CD8-positive, alpha-beta T cell (primary cell): ENCODE measurements at regions of chr3 and their contacts with region 1.

Region 1: GRCh38 chr3:186783073-186783730 is at the start of gene EIF4A2:
- DNase-seq: peak; percentile 79 to 96 (median 88)
- ATAC-seq: peak; percentile 67
- H3K4me3 ChIP-seq: peak within 1 kb of the TSS; percentile 90 to 95
- H3K4me3 Mint-ChIP-seq: peak within 1 kb of the TSS; percentile 99
- H3K27ac ChIP-seq: peak within 1 kb of the TSS; percentile 93 to 97
- H3K27ac Mint-ChIP-seq: peak within 1 kb of the TSS; percentile 99
- H3K4me1 ChIP-seq: peaks cover 38% of the 10 kb centered on the region
- H3K4me1 Mint-ChIP-seq: peaks cover 52% of the 10 kb centered on the region
- H3K27me3 ChIP-seq: no peaks in the 10 kb centered on the region
- H3K27me3 Mint-ChIP-seq: no peaks in the 10 kb centered on the region
- CTCF ChIP-seq: no peak
- total RNA-seq, gene EIF4A2: 934 to 978 TPM

Region 2: GRCh38 chr3:186570096-186570940 is 212.9 kb before region 1 on chr3 and contains the start of gene DNAJB11:
- CTCF ChIA-PET with region 1: no interaction called
- POLR2A ChIA-PET with region 1: interaction called, 34 read pairs
- intact Hi-C with region 1: loop called (anchors 1 to 2 kb)
- DNase-seq: peak; percentile 94 to 100 (median 97)
- ATAC-seq: peak; percentile 82
- H3K4me3 ChIP-seq: peak within 1 kb of the TSS; percentile 73 to 96
- H3K4me3 Mint-ChIP-seq: peak within 1 kb of the TSS; percentile 94
- H3K27ac ChIP-seq: peak within 1 kb of the TSS; percentile 94 to 97
- H3K27ac Mint-ChIP-seq: peak within 1 kb of the TSS; percentile 98
- H3K4me1 ChIP-seq: peaks cover 30% of the 10 kb centered on the region
- H3K4me1 Mint-ChIP-seq: peaks cover 59% of the 10 kb centered on the region
- H3K27me3 ChIP-seq: no peaks in the 10 kb centered on the region
- H3K27me3 Mint-ChIP-seq: no peaks in the 10 kb centered on the region
- CTCF ChIP-seq: no peak
- total RNA-seq, gene DNAJB11: 70.2 to 73.4 TPM

Region 3: GRCh38 chr3:186798239-186798874 is 15.2 kb after region 1 on chr3:
- CTCF ChIA-PET with region 1: interaction called, 4 read pairs
- POLR2A ChIA-PET with region 1: interaction called, 22 read pairs
- intact Hi-C with region 1: no loop called
- DNase-seq: no peak
- ATAC-seq: no peak
- H3K4me3 ChIP-seq: no peak overlapping the region
- H3K4me3 Mint-ChIP-seq: no peak overlapping the region
- H3K27ac ChIP-seq: no peak overlapping the region
- H3K27ac Mint-ChIP-seq: no peak overlapping the region
- H3K4me1 ChIP-seq: no peaks in the 10 kb centered on the region
- H3K4me1 Mint-ChIP-seq: peaks cover 18% of the 10 kb centered on the region
- H3K27me3 ChIP-seq: no peaks in the 10 kb centered on the region
- H3K27me3 Mint-ChIP-seq: no peaks in the 10 kb centered on the region
- CTCF ChIP-seq: no peak

Region 4: DNA sequence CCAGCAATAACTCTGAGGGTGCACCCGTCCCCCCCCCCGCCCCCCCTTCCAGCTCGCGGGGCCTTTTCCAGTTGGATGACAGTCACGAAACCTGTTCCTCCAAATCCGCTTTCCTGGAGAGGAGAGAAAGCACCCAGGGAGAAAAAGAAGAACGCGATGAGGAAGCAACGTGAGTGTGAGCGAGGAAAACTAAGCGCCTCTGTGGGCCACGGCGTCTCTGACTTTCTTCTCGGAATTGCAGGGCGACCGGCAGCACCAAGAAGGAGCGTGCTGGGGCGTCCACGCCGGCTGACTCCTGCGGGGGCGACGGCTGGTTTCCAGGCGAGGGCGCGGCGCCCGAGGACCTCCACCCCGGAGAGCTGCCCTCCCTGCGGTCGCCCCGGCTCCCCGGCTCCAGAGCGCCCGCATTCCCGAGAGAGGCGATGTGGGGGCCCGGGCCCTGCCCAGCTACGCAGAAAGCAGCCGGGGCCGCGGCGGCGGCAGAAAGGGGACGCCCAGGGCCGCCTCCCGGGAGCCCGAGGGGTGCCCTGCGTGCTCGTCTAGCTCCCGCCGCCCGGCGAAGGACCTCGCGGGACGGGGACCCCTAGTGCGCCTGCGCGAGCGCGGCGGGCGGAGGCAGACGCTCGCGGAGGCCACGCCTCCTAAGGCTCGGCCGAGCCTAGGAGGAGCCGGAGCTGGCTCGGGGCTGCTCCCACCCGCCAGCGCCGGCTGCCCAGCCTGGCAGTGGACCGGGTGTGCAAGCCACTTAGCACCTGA is 44.0 kb after region 1 on chr3:
- CTCF ChIA-PET with region 1: interaction called, 6 read pairs
- POLR2A ChIA-PET with region 1: interaction called, 39 read pairs
- intact Hi-C with region 1: loop called (anchors 1 to 2 kb)
- DNase-seq: peak; percentile 59 to 95 (median 83)
- ATAC-seq: peak; percentile 93
- H3K4me3 ChIP-seq: peak overlapping the region; percentile 56 to 70
- H3K4me3 Mint-ChIP-seq: peak overlapping the region; percentile 75
- H3K27ac ChIP-seq: no peak overlapping the region
- H3K27ac Mint-ChIP-seq: no peak overlapping the region
- H3K4me1 ChIP-seq: peaks cover 21% of the 10 kb centered on the region
- H3K4me1 Mint-ChIP-seq: peaks cover 24% of the 10 kb centered on the region
- H3K27me3 ChIP-seq: peaks cover 14 to 26% of the 10 kb centered on the region in 2 experiments
- H3K27me3 Mint-ChIP-seq: peaks cover 50% of the 10 kb centered on the region
- CTCF ChIP-seq: no peak

Region 5: GRCh38 chr3:187041362-187042307 is 258.4 kb after region 1 on chr3:
- CTCF ChIA-PET with region 1: no interaction called
- POLR2A ChIA-PET with region 1: interaction called, 3 read pairs
- intact Hi-C with region 1: loop called in 1 of 2 experiments (anchors 5 kb)
- DNase-seq: peak in 8 of 9 experiments; percentile 38 to 84 (median 62)
- ATAC-seq: peak; percentile 95
- H3K4me3 ChIP-seq: peak overlapping the region in 1 of 2 experiments; percentile 5
- H3K4me3 Mint-ChIP-seq: peak overlapping the region; percentile 49
- H3K27ac ChIP-seq: peak overlapping the region; percentile 44 to 86
- H3K27ac Mint-ChIP-seq: peak overlapping the region; percentile 95
- H3K4me1 ChIP-seq: peaks cover 80% of the 10 kb centered on the region
- H3K4me1 Mint-ChIP-seq: peaks cover 82% of the 10 kb centered on the region
- H3K27me3 ChIP-seq: no peaks in the 10 kb centered on the region
- H3K27me3 Mint-ChIP-seq: no peaks in the 10 kb centered on the region
- CTCF ChIP-seq: no peak

Region 6: GRCh38 chr3:187264021-187264420 is 480.8 kb after region 1 on chr3:
- CTCF ChIA-PET with region 1: no interaction called
- POLR2A ChIA-PET with region 1: no interaction called
- intact Hi-C with region 1: no loop called
- DNase-seq: no peak
- ATAC-seq: no peak
- H3K4me3 ChIP-seq: no peak overlapping the region
- H3K4me3 Mint-ChIP-seq: no peak overlapping the region
- H3K27ac ChIP-seq: no peak overlapping the region
- H3K27ac Mint-ChIP-seq: no peak overlapping the region
- H3K4me1 ChIP-seq: no peaks in the 10 kb centered on the region
- H3K4me1 Mint-ChIP-seq: no peaks in the 10 kb centered on the region
- H3K27me3 ChIP-seq: no peaks in the 10 kb centered on the region
- H3K27me3 Mint-ChIP-seq: peaks cover 21% of the 10 kb centered on the region
- CTCF ChIP-seq: no peak

Region 7: GRCh38 chr3:188108703-188109412 is 1325.7 kb after region 1 on chr3:
- CTCF ChIA-PET with region 1: no interaction called
- POLR2A ChIA-PET with region 1: no interaction called
- intact Hi-C with region 1: no loop called
- DNase-seq: no peak
- ATAC-seq: no peak
- H3K4me3 ChIP-seq: no peak overlapping the region
- H3K4me3 Mint-ChIP-seq: no peak overlapping the region
- H3K27ac ChIP-seq: no peak overlapping the region
- H3K27ac Mint-ChIP-seq: no peak overlapping the region
- H3K4me1 ChIP-seq: no peaks in the 10 kb centered on the region
- H3K4me1 Mint-ChIP-seq: peaks cover 6% of the 10 kb centered on the region
- H3K27me3 ChIP-seq: no peaks in the 10 kb centered on the region
- H3K27me3 Mint-ChIP-seq: no peaks in the 10 kb centered on the region
- CTCF ChIP-seq: no peak